Activated CD4-positive, alpha-beta T cell treated with anti-CD3 and anti-CD28 coated beads, Interleukin-2, amount 10 ng/mL, durations not matched to agents 24 days and 14 days (primary cell): ENCODE measurements at regions of chr3 and their contacts with region 1.

Region 1: DNA sequence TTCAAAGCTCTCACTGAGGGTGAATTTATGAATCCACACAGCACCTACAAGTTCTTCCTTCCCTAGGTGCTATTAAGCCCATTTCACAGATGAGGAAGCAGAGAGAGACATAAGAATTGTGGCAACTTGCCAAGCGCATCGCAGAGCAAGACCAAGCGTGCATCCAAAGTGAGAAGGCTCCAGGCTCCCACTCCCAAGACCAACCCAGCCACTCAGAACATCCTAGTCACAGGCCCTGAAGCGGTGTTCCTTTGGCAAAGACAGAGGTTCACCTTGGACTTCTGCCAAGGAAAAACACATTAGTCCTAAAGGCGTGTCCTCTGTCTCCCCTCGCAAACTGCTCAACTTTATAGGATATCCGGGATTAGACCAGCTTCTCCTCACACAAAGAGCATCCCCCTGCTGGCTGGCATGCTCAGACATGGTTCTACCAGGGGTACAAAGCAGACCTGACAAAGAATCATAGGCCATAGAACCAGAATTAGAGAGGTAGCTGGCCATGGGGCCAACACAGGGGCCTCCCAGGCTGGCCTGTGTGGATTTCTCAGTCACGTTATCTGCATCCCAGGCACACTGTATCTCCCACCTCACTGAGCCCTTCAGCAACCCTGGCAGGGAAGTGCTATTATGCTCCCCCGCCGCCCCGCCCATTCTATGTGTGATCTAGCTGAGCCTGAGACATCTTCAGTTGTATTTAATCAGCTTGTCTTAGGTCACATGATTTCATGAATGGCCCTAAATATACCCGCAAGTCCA is 160.2 kb downstream of the FOXP1 start:
- DNase-seq: no peak
- H3K4me3 Mint-ChIP-seq: no peak overlapping the region
- H3K27ac Mint-ChIP-seq: no peak overlapping the region
- H3K4me1 Mint-ChIP-seq: peaks cover 38% of the 10 kb centered on the region
- H3K27me3 Mint-ChIP-seq: peaks cover 34% of the 10 kb centered on the region

Region 2: GRCh38 chr3:71285086-71285485 is 138.2 kb before region 1 on chr3:
- intact Hi-C with region 1: no loop called
- DNase-seq: no peak
- H3K4me3 Mint-ChIP-seq: no peak overlapping the region
- H3K27ac Mint-ChIP-seq: no peak overlapping the region
- H3K4me1 Mint-ChIP-seq: no peaks in the 10 kb centered on the region
- H3K27me3 Mint-ChIP-seq: peaks cover 4% of the 10 kb centered on the region

Region 3: GRCh38 chr3:71360764-71361163 is 62.6 kb before region 1 on chr3:
- intact Hi-C with region 1: loop called (anchors 1 kb)
- DNase-seq: no peak
- H3K4me3 Mint-ChIP-seq: peak overlapping the region; percentile 23
- H3K27ac Mint-ChIP-seq: peak overlapping the region; percentile 89
- H3K4me1 Mint-ChIP-seq: peaks cover 25% of the 10 kb centered on the region
- H3K27me3 Mint-ChIP-seq: peaks cover 19% of the 10 kb centered on the region

Region 4: GRCh38 chr3:71380096-71380495 is 43.2 kb before region 1 on chr3:
- intact Hi-C with region 1: loop called (anchors 5 kb)
- DNase-seq: no peak
- H3K4me3 Mint-ChIP-seq: no peak overlapping the region
- H3K27ac Mint-ChIP-seq: no peak overlapping the region
- H3K4me1 Mint-ChIP-seq: peaks cover 22% of the 10 kb centered on the region
- H3K27me3 Mint-ChIP-seq: peaks cover 12% of the 10 kb centered on the region

Region 5: DNA sequence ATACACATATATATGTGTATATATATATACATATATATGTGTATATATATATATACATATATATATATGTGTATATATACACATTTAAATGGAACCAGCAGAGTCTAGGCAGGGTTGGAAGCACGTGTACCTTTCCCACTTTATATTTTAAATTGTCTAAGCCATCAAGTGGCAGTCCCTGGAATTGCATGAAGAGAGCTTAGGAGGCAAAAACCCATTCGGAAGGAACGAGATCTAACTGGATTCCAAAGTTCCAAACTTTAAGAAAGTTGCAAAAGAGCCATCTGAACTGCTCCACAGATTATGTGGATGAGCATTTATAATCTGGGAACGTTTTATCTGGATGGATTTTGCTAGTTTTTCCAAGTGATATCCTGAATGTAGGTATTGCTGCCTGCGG is 26.3 kb before region 1 on chr3:
- intact Hi-C with region 1: loop called (anchors 1 kb)
- DNase-seq: no peak
- H3K4me3 Mint-ChIP-seq: no peak overlapping the region
- H3K27ac Mint-ChIP-seq: no peak overlapping the region
- H3K4me1 Mint-ChIP-seq: peaks cover 22% of the 10 kb centered on the region
- H3K27me3 Mint-ChIP-seq: peaks cover 35% of the 10 kb centered on the region

Region 6: GRCh38 chr3:71461749-71462465 is 38.6 kb after region 1 on chr3:
- intact Hi-C with region 1: loop called (anchors 2 kb)
- DNase-seq: no peak
- H3K4me3 Mint-ChIP-seq: no peak overlapping the region
- H3K27ac Mint-ChIP-seq: peak overlapping the region; percentile 79
- H3K4me1 Mint-ChIP-seq: peaks cover 24% of the 10 kb centered on the region
- H3K27me3 Mint-ChIP-seq: peaks cover 10% of the 10 kb centered on the region